Psoas muscle (tissue), 8 donors: ENCODE measurements at regions of chr4 and their contacts with region 1.

Region 1: GRCh38 chr4:144681806-144682205 is 35.9 kb downstream of the HHIP start:
- DNase-seq: no peak
- ATAC-seq: no peak
- H3K4me3 ChIP-seq: no peak overlapping the region
- H3K27ac ChIP-seq: no peak overlapping the region
- H3K4me1 ChIP-seq: no peaks in the 10 kb centered on the region
- H3K27me3 ChIP-seq: no peaks in the 10 kb centered on the region
- CTCF ChIP-seq: no peak

Region 2: GRCh38 chr4:144716778-144717177 is 35.0 kb after region 1 on chr4:
- intact Hi-C with region 1: loop called in 1 of 2 experiments (anchors 2 kb)
- DNase-seq: no peak
- ATAC-seq: no peak
- H3K4me3 ChIP-seq: no peak overlapping the region
- H3K27ac ChIP-seq: no peak overlapping the region
- H3K4me1 ChIP-seq: no peaks in the 10 kb centered on the region
- H3K27me3 ChIP-seq: no peaks in the 10 kb centered on the region
- CTCF ChIP-seq: no peak